Calu3 (cell line): ENCODE measurements at regions of chr2 and their contacts with region 1.

Region 1: DNA sequence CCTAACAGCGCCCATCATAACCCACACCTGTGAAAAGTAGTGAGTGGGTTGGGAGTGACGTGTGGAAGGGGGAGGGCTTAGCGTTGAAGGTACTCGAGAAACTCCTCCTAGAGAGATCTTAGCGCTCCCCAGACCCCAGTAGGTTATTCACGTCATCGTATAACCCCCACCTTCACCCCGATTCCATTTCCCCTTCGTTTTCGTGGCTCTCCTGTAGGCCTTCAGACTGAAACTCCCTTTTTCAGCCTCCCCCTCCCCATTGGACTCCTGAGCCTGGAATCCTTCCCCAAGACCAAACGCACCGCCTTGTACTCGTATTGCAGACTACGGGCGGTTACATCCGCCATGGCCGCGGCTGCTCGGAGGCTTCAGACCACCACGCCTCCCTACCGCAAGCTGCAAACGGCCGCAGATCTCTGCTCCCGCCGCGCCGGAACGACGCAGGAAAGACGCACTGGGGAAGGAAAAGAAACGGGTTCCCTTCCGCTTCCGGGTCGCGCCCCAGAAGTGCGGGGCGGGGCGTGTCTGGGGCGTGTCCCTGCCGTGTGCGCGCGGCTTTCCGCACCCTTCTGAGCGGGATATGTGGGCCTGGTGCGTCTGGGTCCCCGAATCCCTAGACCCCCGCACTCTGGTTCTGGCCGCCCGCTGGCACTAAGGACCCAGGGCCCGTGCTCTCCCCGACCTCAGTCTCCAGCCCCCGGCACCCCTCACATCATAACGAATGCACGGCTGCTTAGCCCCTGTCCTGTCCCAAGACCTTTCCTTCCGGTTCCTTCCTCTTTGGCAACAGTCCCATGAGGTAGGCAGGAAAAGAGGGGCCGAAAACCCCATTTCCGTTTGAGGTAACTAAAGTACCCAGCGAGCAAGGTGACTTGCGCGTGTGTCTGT is at the start of gene SNRNP200:
- DNase-seq: peak; percentile 88
- H3K4me3 Mint-ChIP-seq: peak within 1 kb of the TSS; percentile 98
- H3K27ac Mint-ChIP-seq: peak within 1 kb of the TSS; percentile 94
- H3K4me1 Mint-ChIP-seq: peaks cover 22% of the 10 kb centered on the region
- H3K27me3 Mint-ChIP-seq: no peaks in the 10 kb centered on the region
- CTCF ChIP-seq: no peak
- total RNA-seq, gene SNRNP200: 140 and 143 TPM in 2 replicates

Region 2: GRCh38 chr2:96241900-96242611 is 63.3 kb before region 1 on chr2:
- CTCF ChIA-PET with region 1: no interaction called
- intact Hi-C with region 1: no loop called
- DNase-seq: no peak
- H3K4me3 Mint-ChIP-seq: no peak overlapping the region
- H3K27ac Mint-ChIP-seq: no peak overlapping the region
- H3K4me1 Mint-ChIP-seq: no peaks in the 10 kb centered on the region
- H3K27me3 Mint-ChIP-seq: no peaks in the 10 kb centered on the region
- CTCF ChIP-seq: no peak

Region 3: DNA sequence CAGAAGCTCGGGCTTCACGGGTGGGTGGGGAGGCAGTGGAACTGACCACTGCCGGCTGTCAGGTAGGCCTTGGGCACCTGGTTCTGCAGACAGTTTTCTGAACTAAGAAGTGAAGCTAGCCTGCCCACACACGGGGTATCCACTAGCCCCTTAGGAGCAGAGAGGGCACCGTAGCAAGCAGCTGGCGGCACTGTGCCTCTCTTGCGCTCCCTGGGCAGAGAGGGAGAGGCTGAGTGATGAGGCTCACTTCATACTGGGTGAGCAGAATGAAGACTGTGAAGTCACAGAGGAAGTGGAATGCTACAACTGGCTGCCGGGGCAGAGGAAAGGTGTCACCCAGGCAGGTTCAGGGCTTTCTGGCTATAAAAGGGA is 20.5 kb after region 1 on chr2:
- CTCF ChIA-PET with region 1: no interaction called
- intact Hi-C with region 1: loop called (anchors 1 kb)
- DNase-seq: no peak
- H3K4me3 Mint-ChIP-seq: peak overlapping the region; percentile 56
- H3K27ac Mint-ChIP-seq: no peak overlapping the region
- H3K4me1 Mint-ChIP-seq: no peaks in the 10 kb centered on the region
- H3K27me3 Mint-ChIP-seq: peaks cover 28% of the 10 kb centered on the region
- CTCF ChIP-seq: no peak